CD8-positive, alpha-beta T cell (primary cell): ENCODE measurements at regions of chr9 and their contacts with region 1.

Region 1: GRCh38 chr9:68887232-68887631 is 126.7 kb downstream of the PRKACG start:
- DNase-seq: no peak
- ATAC-seq: no peak
- H3K4me3 ChIP-seq: no peak overlapping the region
- H3K4me3 Mint-ChIP-seq: no peak overlapping the region
- H3K27ac ChIP-seq: no peak overlapping the region
- H3K27ac Mint-ChIP-seq: peak overlapping the region; percentile 2
- H3K4me1 ChIP-seq: peaks cover 30% of the 10 kb centered on the region
- H3K4me1 Mint-ChIP-seq: peaks cover 17% of the 10 kb centered on the region
- H3K27me3 ChIP-seq: no peaks in the 10 kb centered on the region
- H3K27me3 Mint-ChIP-seq: peaks cover 10% of the 10 kb centered on the region
- CTCF ChIP-seq: no peak

Region 2: DNA sequence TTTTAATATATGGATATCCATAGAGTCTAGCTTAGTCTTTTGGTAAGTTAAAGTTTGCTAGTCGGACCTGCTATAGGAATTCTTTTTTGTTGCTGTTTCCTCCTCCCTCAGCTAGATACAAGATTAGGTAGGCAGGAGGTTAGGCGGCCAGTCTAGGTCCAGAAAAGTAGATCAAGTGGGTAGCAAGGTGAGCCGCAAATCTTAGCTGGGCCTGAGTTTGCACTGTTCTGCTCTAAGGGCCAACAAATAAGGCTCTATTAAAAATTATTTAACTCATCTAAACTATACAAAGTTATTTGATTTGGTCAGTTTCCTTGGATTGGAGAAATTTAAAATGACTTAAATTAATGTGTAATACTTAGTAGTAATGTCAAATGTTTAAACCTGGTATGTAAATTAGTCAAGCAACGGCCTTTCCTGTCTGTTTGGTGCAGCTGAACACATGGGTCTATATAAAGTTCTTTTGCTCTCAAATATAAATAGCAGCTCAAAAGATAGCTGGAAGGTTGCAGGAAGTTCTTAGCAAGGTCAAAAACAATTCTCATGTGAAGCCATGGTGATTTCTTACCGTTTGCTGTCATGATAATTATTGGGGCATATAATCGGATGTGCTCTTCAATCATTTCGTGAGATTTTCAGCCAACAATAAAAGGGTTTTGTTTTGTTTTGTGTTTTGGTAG is 54.7 kb after region 1 on chr9:
- CTCF ChIA-PET with region 1: no interaction called
- POLR2A ChIA-PET with region 1: no interaction called
- intact Hi-C with region 1: loop called in 1 of 2 experiments (anchors 5 kb)
- DNase-seq: no peak
- ATAC-seq: no peak
- H3K4me3 ChIP-seq: no peak overlapping the region
- H3K4me3 Mint-ChIP-seq: no peak overlapping the region
- H3K27ac ChIP-seq: no peak overlapping the region
- H3K27ac Mint-ChIP-seq: no peak overlapping the region
- H3K4me1 ChIP-seq: no peaks in the 10 kb centered on the region
- H3K4me1 Mint-ChIP-seq: no peaks in the 10 kb centered on the region
- H3K27me3 ChIP-seq: no peaks in the 10 kb centered on the region
- H3K27me3 Mint-ChIP-seq: peaks cover 10% of the 10 kb centered on the region
- CTCF ChIP-seq: no peak